CD4-positive, alpha-beta T cell (primary cell): ENCODE measurements at regions of chr2 and their contacts with region 1.

Region 1: GRCh38 chr2:85288244-85288725 is 39.5 kb downstream of the TGOLN2 start:
- DNase-seq: no peak
- ATAC-seq: no peak
- H3K4me3 ChIP-seq: no peak overlapping the region
- H3K4me3 Mint-ChIP-seq: no peak overlapping the region
- H3K27ac ChIP-seq: no peak overlapping the region
- H3K27ac Mint-ChIP-seq: no peak overlapping the region
- H3K4me1 ChIP-seq: peaks cover 24% of the 10 kb centered on the region
- H3K4me1 Mint-ChIP-seq: peaks cover 30% of the 10 kb centered on the region
- H3K27me3 ChIP-seq: no peaks in the 10 kb centered on the region
- H3K27me3 Mint-ChIP-seq: no peaks in the 10 kb centered on the region
- CTCF ChIP-seq: no peak

Region 2: DNA sequence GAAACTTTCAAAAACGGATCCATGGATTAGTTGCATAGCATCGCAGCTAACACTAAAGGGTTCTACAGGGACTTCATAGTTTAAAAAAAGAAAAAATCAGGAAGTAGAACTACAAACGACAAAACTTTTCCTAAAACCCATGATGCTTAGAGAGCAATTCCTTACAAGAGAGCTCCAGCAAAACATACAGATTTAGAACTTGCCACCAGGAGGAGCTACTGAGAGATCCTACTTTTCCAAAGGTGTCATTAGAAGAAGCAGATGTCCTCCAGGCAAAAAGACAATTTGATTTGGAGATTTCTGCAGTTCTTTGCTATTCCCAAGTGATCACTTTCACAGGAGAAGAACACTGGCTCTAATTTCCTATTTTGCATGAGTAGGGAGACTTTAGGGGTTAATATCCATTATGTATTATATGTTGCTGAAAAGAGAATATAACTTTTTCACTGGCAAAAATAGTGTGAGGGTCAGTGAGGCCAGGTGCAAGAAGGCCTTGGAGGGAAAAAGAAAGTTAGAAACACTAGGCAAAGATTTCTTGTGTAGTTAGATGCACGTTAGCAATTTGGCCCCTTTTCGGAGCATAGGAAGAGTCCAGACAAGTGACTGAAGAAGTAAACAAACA is 1265.4 kb before region 1 on chr2:
- CTCF ChIA-PET with region 1: no interaction called
- POLR2A ChIA-PET with region 1: no interaction called
- intact Hi-C with region 1: loop called in 1 of 2 experiments (anchors 5 kb)
- DNase-seq: peak in 3 of 14 experiments; percentile 33 to 46 (median 43)
- ATAC-seq: no peak
- H3K4me3 ChIP-seq: no peak overlapping the region
- H3K4me3 Mint-ChIP-seq: no peak overlapping the region
- H3K27ac ChIP-seq: no peak overlapping the region
- H3K27ac Mint-ChIP-seq: no peak overlapping the region
- H3K4me1 ChIP-seq: no peaks in the 10 kb centered on the region
- H3K4me1 Mint-ChIP-seq: no peaks in the 10 kb centered on the region
- H3K27me3 ChIP-seq: no peaks in the 10 kb centered on the region
- H3K27me3 Mint-ChIP-seq: peaks cover 8% of the 10 kb centered on the region
- CTCF ChIP-seq: no peak

Region 3: DNA sequence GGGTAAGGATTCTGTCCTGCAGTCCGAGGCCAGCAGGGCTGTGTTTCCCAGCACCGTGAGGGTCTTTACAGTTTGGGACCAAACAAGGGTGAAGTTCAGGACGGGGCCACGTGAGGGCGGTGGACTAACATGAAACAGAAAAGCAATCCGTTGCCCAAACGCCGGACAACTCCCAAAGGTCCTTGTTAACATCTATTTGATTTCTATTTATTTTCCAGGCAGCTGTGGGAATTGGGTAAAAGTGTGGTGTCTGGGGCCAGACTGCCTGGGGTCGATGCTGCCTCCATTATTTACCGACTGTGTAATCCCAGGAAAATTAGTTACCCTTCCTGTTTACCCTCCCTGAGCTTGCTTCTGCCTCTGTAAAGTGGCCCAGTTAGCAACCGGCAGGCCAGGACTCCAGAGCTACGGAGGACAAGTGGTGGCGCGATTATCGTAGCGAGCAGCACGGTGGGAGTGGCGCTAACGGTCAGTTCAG is 221.4 kb before region 1 on chr2:
- CTCF ChIA-PET with region 1: no interaction called
- POLR2A ChIA-PET with region 1: no interaction called
- intact Hi-C with region 1: loop called in 1 of 2 experiments (anchors 10 kb)
- DNase-seq: peak in 7 of 14 experiments; percentile 2 to 34 (median 22)
- ATAC-seq: no peak
- H3K4me3 ChIP-seq: no peak overlapping the region
- H3K4me3 Mint-ChIP-seq: no peak overlapping the region
- H3K27ac ChIP-seq: no peak overlapping the region
- H3K27ac Mint-ChIP-seq: no peak overlapping the region
- H3K4me1 ChIP-seq: peaks cover 5% of the 10 kb centered on the region
- H3K4me1 Mint-ChIP-seq: peaks cover 6% of the 10 kb centered on the region
- H3K27me3 ChIP-seq: peaks cover 3 to 12% of the 10 kb centered on the region in 2 experiments
- H3K27me3 Mint-ChIP-seq: peaks cover 25% of the 10 kb centered on the region
- CTCF ChIP-seq: no peak

Region 4: GRCh38 chr2:85132834-85133637 is 155.2 kb before region 1 on chr2 and contains the start of gene TCF7L1:
- CTCF ChIA-PET with region 1: no interaction called
- POLR2A ChIA-PET with region 1: no interaction called
- intact Hi-C with region 1: loop called in 1 of 2 experiments (anchors 10 kb)
- DNase-seq: peak in 3 of 14 experiments; percentile 15 to 39 (median 35)
- ATAC-seq: peak; percentile 43
- H3K4me3 ChIP-seq: peak within 1 kb of the TSS; percentile 32
- H3K4me3 Mint-ChIP-seq: peak within 1 kb of the TSS; percentile 76
- H3K27ac ChIP-seq: no peak within 1 kb of the TSS
- H3K27ac Mint-ChIP-seq: no peak within 1 kb of the TSS
- H3K4me1 ChIP-seq: peaks cover 22% of the 10 kb centered on the region
- H3K4me1 Mint-ChIP-seq: peaks cover 9% of the 10 kb centered on the region
- H3K27me3 ChIP-seq: peaks cover 32 to 76% of the 10 kb centered on the region in 2 experiments
- H3K27me3 Mint-ChIP-seq: peaks cover 70% of the 10 kb centered on the region
- CTCF ChIP-seq: no peak
- total RNA-seq, gene TCF7L1: not detected

Region 5: GRCh38 chr2:85230679-85231467 is 57.4 kb before region 1 on chr2:
- CTCF ChIA-PET with region 1: no interaction called
- POLR2A ChIA-PET with region 1: no interaction called
- intact Hi-C with region 1: no loop called
- DNase-seq: no peak
- ATAC-seq: no peak
- H3K4me3 ChIP-seq: no peak overlapping the region
- H3K4me3 Mint-ChIP-seq: no peak overlapping the region
- H3K27ac ChIP-seq: no peak overlapping the region
- H3K27ac Mint-ChIP-seq: no peak overlapping the region
- H3K4me1 ChIP-seq: no peaks in the 10 kb centered on the region
- H3K4me1 Mint-ChIP-seq: no peaks in the 10 kb centered on the region
- H3K27me3 ChIP-seq: peaks cover 2 to 9% of the 10 kb centered on the region in 2 experiments
- H3K27me3 Mint-ChIP-seq: peaks cover 43% of the 10 kb centered on the region
- CTCF ChIP-seq: no peak

Region 6: DNA sequence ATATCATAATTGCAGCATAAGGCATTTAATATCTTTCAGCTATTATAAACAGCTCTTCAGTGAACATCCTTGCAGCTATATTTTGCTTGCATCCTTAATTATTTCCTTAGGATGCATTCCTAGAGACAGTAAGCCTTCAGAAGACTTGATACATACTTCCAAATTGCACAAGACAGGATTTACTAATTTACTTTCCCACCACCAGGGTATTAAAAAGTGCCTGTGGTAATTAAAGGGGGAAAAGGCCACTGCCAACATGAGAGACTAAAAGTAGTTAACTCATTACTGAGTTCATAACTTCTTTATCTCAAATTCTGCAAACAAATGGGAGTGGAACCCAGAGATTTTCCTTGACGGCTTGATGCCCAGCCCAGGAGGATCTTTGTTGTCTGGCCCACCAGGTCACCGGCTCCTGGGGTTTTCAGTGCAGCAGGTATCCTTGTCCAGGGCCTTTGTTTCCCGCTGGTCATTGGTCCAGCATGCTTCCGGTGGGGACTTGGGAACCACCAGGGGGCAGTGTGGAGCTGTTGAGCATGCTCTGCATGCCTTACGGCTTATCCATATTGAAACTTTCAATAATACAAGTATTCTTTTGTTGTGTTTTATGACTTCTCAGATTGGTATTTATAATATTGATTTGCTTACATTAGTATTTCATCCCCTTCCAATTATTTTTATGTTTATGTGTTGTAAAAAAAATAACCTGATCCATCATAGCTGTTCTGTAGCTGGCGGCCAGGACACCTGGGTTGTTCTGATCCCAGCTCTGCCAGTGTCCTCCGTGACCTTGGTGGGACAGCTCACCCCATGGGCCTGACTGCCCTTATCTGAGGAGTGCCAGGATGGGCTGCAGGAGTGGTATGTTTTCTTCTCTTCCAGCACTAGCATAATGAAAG is 21.9 kb before region 1 on chr2:
- CTCF ChIA-PET with region 1: no interaction called
- POLR2A ChIA-PET with region 1: no interaction called
- intact Hi-C with region 1: loop called (anchors 1 to 2 kb)
- DNase-seq: peak; percentile 47 to 84 (median 66)
- ATAC-seq: peak; percentile 52
- H3K4me3 ChIP-seq: no peak overlapping the region
- H3K4me3 Mint-ChIP-seq: no peak overlapping the region
- H3K27ac ChIP-seq: no peak overlapping the region
- H3K27ac Mint-ChIP-seq: no peak overlapping the region
- H3K4me1 ChIP-seq: no peaks in the 10 kb centered on the region
- H3K4me1 Mint-ChIP-seq: no peaks in the 10 kb centered on the region
- H3K27me3 ChIP-seq: no peaks in the 10 kb centered on the region
- H3K27me3 Mint-ChIP-seq: no peaks in the 10 kb centered on the region
- CTCF ChIP-seq: peak; percentile 99